ENCODE measurements at regions of chr15 and their contacts with region 1.

Region 1: DNA sequence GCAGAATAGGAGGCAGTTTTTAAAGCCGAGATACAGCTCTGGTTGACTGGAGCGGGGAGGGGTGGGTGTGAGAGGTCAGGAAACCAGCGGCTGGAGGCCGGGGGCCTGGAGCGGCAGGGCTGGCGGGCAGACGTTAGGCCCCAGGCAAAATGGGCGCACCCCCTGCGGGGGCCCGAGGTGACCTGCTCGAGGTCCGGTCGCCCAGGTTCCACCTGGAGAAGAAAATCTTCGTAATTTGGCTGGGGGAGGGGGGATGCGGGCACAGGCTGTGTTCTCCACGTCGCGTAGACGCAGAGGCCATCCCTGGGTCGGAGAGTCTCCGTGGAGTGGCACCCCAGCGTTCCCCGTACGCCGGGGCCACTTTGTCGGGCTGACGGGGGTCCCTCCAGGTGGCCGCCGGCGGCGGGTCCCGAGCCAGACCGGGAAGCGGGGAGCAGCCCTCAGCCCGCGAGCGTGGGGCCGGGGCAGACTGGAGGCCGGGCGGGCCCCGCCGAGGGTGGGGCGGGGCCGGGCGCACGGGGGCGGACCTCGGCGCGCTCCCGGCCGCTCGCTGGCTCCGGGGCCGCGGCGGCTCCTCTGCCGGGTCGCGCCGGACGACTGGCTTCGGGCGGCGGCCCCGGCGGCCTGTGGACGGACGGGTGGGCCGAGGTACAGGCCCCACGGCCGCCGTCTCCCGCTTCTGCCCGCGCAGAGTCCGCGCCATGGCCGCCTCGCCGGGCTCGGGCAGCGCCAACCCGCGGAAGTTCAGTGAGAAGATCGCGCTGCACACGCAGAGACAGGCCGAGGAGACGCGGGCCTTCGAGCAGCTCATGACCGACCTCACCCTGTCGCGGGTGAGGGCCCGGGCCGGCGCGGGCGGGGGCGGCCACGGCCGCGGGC is at the start of gene CRTC3:
- DNase-seq: peak; percentile 48 to 63
- H3K4me3 ChIP-seq: peak within 1 kb of the TSS; percentile 87
- H3K4me3 Mint-ChIP-seq: peak within 1 kb of the TSS; percentile 94
- H3K27ac Mint-ChIP-seq: peak within 1 kb of the TSS; percentile 94
- H3K4me1 ChIP-seq: 0 out of 2 replicates have a peak, but pooled peaks cover 3% of the 10 kb centered on the region
- H3K4me1 Mint-ChIP-seq: peaks cover 14% of the 10 kb centered on the region
- H3K27me3 ChIP-seq: no peaks in the 10 kb centered on the region
- H3K27me3 Mint-ChIP-seq: no peaks in the 10 kb centered on the region
- CTCF ChIP-seq: no peak
- total RNA-seq, gene CRTC3: 31.4 and 35.0 TPM in 2 replicates

Region 2: GRCh38 chr15:90691982-90692773 is 162.6 kb after region 1 on chr15:
- CTCF ChIA-PET with region 1: no interaction called
- POLR2A ChIA-PET with region 1: no interaction called
- intact Hi-C with region 1: loop called (anchors 10 kb)
- DNase-seq: no peak
- H3K4me3 ChIP-seq: no peak overlapping the region
- H3K4me3 Mint-ChIP-seq: no peak overlapping the region
- H3K27ac Mint-ChIP-seq: no peak overlapping the region
- H3K4me1 ChIP-seq: no peaks in the 10 kb centered on the region
- H3K4me1 Mint-ChIP-seq: no peaks in the 10 kb centered on the region
- H3K27me3 ChIP-seq: no peaks in the 10 kb centered on the region
- H3K27me3 Mint-ChIP-seq: no peaks in the 10 kb centered on the region
- CTCF ChIP-seq: no peak